Right ventricle myocardium superior (tissue), 1 donor: ENCODE measurements at regions of chr4 and their contacts with region 1.

Region 1: GRCh38 chr4:1130316-1131186 is 17.2 kb upstream of the RNF212 start:
- DNase-seq: peak; percentile 71
- ATAC-seq: peak; percentile 97

Region 2: DNA sequence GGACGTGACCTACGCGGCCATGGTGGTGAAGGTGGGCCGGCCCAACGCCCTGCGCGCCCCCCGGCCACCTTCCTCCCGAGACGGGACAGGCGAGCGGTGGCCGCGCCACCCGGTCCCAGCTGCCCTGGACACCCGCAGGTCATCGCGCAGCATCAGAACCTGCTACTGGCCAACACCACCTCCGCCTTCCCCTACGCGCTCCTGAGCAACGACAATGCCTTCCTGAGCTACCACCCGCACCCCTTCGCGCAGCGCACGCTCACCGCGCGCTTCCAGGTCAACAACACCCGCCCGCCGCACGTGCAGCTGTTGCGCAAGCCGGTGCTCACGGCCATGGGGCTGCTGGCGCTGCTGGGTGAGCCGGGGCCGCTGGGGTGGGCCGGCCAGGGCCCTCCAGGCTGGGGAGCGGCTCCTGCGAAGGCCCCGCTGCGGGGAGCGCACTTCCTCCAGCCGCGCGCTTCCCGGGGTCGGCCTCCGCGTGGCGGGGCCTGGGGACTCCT is 128.4 kb before region 1 on chr4:
- intact Hi-C with region 1: no loop called
- DNase-seq: no peak
- ATAC-seq: peak; percentile 20

Region 3: GRCh38 chr4:1072830-1073446 is 57.6 kb before region 1 on chr4:
- intact Hi-C with region 1: no loop called
- DNase-seq: no peak
- ATAC-seq: peak; percentile 58

Region 4: GRCh38 chr4:1266881-1267763 is 136.6 kb after region 1 on chr4:
- intact Hi-C with region 1: loop called (anchors 5 kb)
- DNase-seq: no peak
- ATAC-seq: no peak

Region 5: GRCh38 chr4:1289207-1290164 is 158.9 kb after region 1 on chr4 and contains the start of gene MAEA:
- intact Hi-C with region 1: no loop called
- DNase-seq: peak; percentile 98
- ATAC-seq: peak; percentile 97
- total RNA-seq, gene MAEA: 50.3 TPM

Region 6: GRCh38 chr4:1519787-1520661 is 389.5 kb after region 1 on chr4:
- intact Hi-C with region 1: loop called (anchors 10 kb)
- DNase-seq: no peak
- ATAC-seq: no peak